CD4-positive, alpha-beta memory T cell (primary cell): ENCODE measurements at regions of chr18 and their contacts with region 1.

Region 1: GRCh38 chr18:59593291-59593717 is 103.9 kb downstream of the CCBE1 start:
- DNase-seq: no peak
- H3K4me3 ChIP-seq: no peak overlapping the region
- H3K4me3 Mint-ChIP-seq: no peak overlapping the region
- H3K27ac ChIP-seq: no peak overlapping the region
- H3K27ac Mint-ChIP-seq: no peak overlapping the region
- H3K4me1 ChIP-seq: no peaks in the 10 kb centered on the region
- H3K4me1 Mint-ChIP-seq: no peaks in the 10 kb centered on the region
- H3K27me3 ChIP-seq: no peaks in the 10 kb centered on the region
- H3K27me3 Mint-ChIP-seq: no peaks in the 10 kb centered on the region

Region 2: GRCh38 chr18:59470561-59471121 is 122.7 kb before region 1 on chr18:
- CTCF ChIA-PET with region 1: no interaction called
- POLR2A ChIA-PET with region 1: no interaction called
- intact Hi-C with region 1: no loop called
- DNase-seq: no peak
- H3K4me3 ChIP-seq: no peak overlapping the region
- H3K4me3 Mint-ChIP-seq: no peak overlapping the region
- H3K27ac ChIP-seq: no peak overlapping the region
- H3K27ac Mint-ChIP-seq: no peak overlapping the region
- H3K4me1 ChIP-seq: no peaks in the 10 kb centered on the region
- H3K4me1 Mint-ChIP-seq: no peaks in the 10 kb centered on the region
- H3K27me3 ChIP-seq: no peaks in the 10 kb centered on the region
- H3K27me3 Mint-ChIP-seq: peaks cover 8 to 9% of the 10 kb centered on the region in 2 donors

Region 3: GRCh38 chr18:59536166-59536565 is 57.1 kb before region 1 on chr18:
- CTCF ChIA-PET with region 1: no interaction called
- POLR2A ChIA-PET with region 1: no interaction called
- intact Hi-C with region 1: loop called (anchors 10 kb)
- DNase-seq: no peak
- H3K4me3 ChIP-seq: no peak overlapping the region
- H3K4me3 Mint-ChIP-seq: no peak overlapping the region
- H3K27ac ChIP-seq: no peak overlapping the region
- H3K27ac Mint-ChIP-seq: no peak overlapping the region
- H3K4me1 ChIP-seq: no peaks in the 10 kb centered on the region
- H3K4me1 Mint-ChIP-seq: peaks cover 0 to 5% (median 0%) of the 10 kb centered on the region in 4 donors
- H3K27me3 ChIP-seq: peaks cover 5% of the 10 kb centered on the region
- H3K27me3 Mint-ChIP-seq: peaks cover 5 to 17% of the 10 kb centered on the region in 2 donors

Region 4: GRCh38 chr18:59576541-59577385 is 16.5 kb before region 1 on chr18:
- CTCF ChIA-PET with region 1: no interaction called
- POLR2A ChIA-PET with region 1: no interaction called
- intact Hi-C with region 1: no loop called
- DNase-seq: no peak
- H3K4me3 ChIP-seq: no peak overlapping the region
- H3K4me3 Mint-ChIP-seq: no peak overlapping the region
- H3K27ac ChIP-seq: no peak overlapping the region
- H3K27ac Mint-ChIP-seq: no peak overlapping the region
- H3K4me1 ChIP-seq: no peaks in the 10 kb centered on the region
- H3K4me1 Mint-ChIP-seq: no peaks in the 10 kb centered on the region
- H3K27me3 ChIP-seq: no peaks in the 10 kb centered on the region
- H3K27me3 Mint-ChIP-seq: peaks cover 0 to 2% of the 10 kb centered on the region in 2 donors